Dorsolateral prefrontal cortex (tissue), 120 donors: ENCODE measurements at regions of chr16 and their contacts with region 1.

Region 1: DNA sequence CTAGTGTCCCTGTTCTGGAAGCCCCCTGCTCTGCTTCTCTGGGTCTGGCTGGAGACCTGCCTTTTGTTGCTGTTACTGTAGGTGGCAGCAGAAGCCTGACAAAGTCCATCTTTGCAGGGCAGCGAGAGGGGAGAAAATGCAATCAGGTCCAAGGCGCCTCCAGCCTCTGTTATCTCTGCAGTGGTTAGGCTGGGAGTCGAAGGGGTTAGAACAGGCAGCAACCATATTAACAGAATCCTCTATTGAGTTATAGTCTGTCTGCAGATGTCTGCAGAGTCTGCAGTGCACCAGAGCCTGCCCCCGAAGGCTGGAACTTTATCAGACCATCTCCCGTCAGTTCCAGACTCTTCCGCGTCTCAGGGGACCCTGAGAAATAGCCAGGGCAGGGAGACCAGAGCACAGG is 404.9 kb upstream of the EEF2KMT start:
- DNase-seq: peak in 7 of 10 donors; percentile 34 to 54 (median 44)
- H3K4me3 ChIP-seq: no peak overlapping the region
- H3K27ac ChIP-seq: no peak overlapping the region
- H3K27me3 ChIP-seq: peaks cover 0 to 10% (median 0%) of the 10 kb centered on the region in 45 donors
- CTCF ChIP-seq: peak in 55 of 56 donors; percentile 16 to 70 (median 55)

Region 2: DNA sequence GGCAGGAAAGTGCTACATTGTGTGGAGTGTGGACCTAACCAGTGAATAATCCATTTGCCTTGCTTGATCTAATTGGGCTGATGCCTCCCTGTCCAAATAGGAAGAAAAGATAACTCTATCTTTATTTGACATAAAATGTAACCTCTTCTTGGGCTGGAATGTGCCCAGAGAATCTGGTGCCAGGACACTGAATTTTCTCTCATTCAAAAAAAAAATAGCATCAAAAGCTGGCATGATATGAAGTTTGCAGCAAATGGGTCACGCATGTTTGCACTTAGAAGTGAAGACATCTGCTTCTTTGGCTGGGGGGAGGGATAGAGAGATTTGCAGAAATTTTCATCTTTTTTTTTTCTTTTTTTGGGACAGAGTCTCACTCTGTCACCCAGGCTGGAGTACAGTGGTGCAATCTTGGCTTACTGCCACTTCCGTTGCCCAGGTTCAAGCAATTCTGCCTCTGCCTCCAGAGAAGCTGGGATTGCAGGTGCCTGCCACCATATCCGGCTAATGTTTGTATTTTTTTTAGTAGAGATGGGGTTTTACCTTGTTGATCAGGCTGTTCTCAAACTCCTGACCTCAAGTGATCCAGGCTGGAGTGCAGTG is 73.3 kb after region 1 on chr16:
- intact Hi-C with region 1: no loop called
- DNase-seq: no peak
- H3K4me3 ChIP-seq: no peak overlapping the region
- H3K27ac ChIP-seq: no peak overlapping the region
- H3K27me3 ChIP-seq: peaks cover 0 to 13% (median 0%) of the 10 kb centered on the region in 45 donors
- CTCF ChIP-seq: no peak

Region 3: GRCh38 chr16:5604770-5605169 is 102.3 kb after region 1 on chr16:
- intact Hi-C with region 1: loop called (anchors 2 to 5 kb)
- DNase-seq: peak in 6 of 10 donors; percentile 4 to 72 (median 54)
- H3K4me3 ChIP-seq: no peak overlapping the region
- H3K27ac ChIP-seq: no peak overlapping the region
- H3K27me3 ChIP-seq: peaks cover 0 to 14% (median 0%) of the 10 kb centered on the region in 45 donors
- CTCF ChIP-seq: peak in 51 of 56 donors; percentile 17 to 61 (median 40)

Region 4: DNA sequence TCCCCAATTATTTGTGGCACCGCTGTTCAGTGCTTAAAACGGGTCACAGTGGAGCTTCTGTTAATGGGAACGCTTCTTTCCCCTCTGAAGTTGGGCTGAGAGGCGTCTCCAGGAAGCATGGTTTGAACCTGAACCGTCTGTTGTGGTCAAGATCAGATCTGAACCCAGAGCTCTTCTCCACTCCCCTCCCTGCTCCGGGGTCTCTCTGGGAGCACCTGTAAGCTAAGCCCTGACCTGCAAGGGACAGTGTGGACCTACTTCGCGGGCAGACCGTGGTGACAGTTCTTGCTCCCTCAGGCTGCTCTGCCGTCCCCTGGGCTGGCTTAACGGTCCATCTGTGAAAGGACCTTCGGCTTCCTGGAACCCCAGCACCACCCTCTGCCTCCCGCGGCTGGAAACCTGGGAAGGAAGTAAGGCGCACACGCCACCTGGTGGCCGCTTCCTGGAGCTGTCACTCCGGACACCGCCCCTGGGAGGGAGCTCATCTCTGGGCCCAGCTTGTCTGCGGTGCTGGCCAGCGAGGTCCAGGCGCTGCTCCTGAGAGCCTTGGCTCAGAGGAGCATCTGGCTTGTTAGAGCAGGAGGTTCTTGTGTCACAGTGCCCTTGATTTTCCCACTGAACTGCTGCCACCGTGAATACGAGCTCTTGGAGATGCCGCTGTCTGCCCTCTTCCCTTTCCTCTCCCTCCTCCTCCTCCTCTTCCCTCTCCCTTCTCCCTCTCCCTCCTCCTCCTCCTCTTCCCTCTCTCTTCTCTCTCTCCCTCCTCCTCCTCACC is 113.6 kb after region 1 on chr16:
- intact Hi-C with region 1: loop called in 1 of 2 experiments (anchors 5 kb)
- DNase-seq: peak; percentile 42 to 80 (median 66)
- H3K4me3 ChIP-seq: peak overlapping the region in 30 of 59 donors; percentile 6 to 52 (median 31)
- H3K27ac ChIP-seq: no peak overlapping the region
- H3K27me3 ChIP-seq: peaks cover 0 to 23% (median 0%) of the 10 kb centered on the region in 45 donors
- CTCF ChIP-seq: peak; percentile 46 to 92 (median 83)

Region 5: GRCh38 chr16:6643080-6643686 is 1140.7 kb after region 1 on chr16:
- intact Hi-C with region 1: loop called in 1 of 2 experiments (anchors 5 kb)
- DNase-seq: peak in 5 of 10 donors; percentile 34 to 80 (median 63)
- H3K4me3 ChIP-seq: no peak overlapping the region
- H3K27ac ChIP-seq: no peak overlapping the region
- H3K27me3 ChIP-seq: peaks cover 0 to 3% (median 0%) of the 10 kb centered on the region in 45 donors
- CTCF ChIP-seq: peak; percentile 84 to 98 (median 92)